Mammary epithelial cell (primary cell): ENCODE measurements at regions of chr16 and their contacts with region 1.

Region 1: GRCh38 chr16:67480833-67481560 is at the start of gene ATP6V0D1:
- DNase-seq: peak; percentile 97
- H3K4me3 ChIP-seq: peak within 1 kb of the TSS; percentile 81 to 97 (median 95)
- H3K27ac ChIP-seq: peak within 1 kb of the TSS; percentile 93
- H3K4me1 ChIP-seq: peaks cover 18% of the 10 kb centered on the region
- H3K27me3 ChIP-seq: no peaks in the 10 kb centered on the region
- CTCF ChIP-seq: peak; percentile 69 to 89
- total RNA-seq, gene ATP6V0D1: 93.3 to 124 TPM

Region 2: DNA sequence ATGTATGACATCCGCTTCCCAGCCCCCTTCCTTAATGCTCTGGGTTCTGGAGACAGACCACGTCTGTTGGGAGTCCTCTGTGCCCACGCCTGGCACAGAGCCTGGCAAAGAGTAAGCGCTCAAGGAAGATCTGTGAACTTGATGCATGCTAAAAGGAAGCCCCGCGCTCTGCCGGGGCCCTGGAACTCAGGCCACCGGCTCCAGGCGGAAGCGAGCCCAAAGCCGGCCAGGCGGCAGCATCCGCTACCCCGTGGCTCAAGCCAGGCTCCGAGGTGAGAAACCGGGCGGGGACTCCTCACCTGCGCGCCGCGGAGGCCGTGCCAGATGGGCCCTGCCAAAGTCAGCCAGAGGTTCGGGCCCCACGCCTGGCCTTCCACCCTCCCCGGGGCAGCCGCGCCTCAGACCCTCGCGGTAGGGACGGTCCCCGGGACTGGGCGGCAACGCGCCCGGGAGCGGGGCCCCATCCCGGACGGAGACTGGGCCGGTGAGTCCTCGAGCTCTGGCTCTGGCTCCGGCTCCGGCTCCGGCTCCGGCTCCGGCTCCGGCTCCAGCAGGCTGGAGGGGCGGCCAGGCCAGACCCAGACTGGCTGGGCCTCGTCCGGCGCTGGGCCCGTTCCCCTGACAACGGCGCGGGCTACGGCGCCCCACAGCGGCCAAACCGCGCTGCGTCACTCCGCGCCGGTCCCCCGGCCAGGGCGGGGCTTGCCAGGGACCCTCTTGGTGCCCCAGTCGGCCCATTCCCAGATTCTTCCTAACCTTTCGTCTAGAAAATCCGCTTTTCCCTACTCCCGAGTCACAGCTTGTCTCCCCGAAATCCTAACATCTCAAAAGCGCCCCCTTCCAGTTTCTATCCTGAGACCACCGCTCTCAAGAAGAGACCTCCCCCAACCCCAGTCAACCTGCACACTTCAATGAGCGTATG is 64.9 kb before region 1 on chr16 and contains the start of gene ZDHHC1:
- CTCF ChIA-PET with region 1: no interaction called
- dilution Hi-C with region 1: loop called (anchors 5 kb)
- in situ Hi-C with region 1: no loop called
- intact Hi-C with region 1: no loop called
- DNase-seq: peak; percentile 53
- H3K4me3 ChIP-seq: peak within 1 kb of the TSS; percentile 54 to 74 (median 62)
- H3K27ac ChIP-seq: peak within 1 kb of the TSS; percentile 59
- H3K4me1 ChIP-seq: peaks cover 7% of the 10 kb centered on the region
- H3K27me3 ChIP-seq: no peaks in the 10 kb centered on the region
- CTCF ChIP-seq: peak; percentile 47 to 66
- total RNA-seq, gene ZDHHC1: 5.3 to 6.3 TPM

Region 3: GRCh38 chr16:67441271-67441753 is 39.7 kb before region 1 on chr16:
- CTCF ChIA-PET with region 1: no interaction called
- dilution Hi-C with region 1: no loop called
- in situ Hi-C with region 1: no loop called
- intact Hi-C with region 1: no loop called
- DNase-seq: no peak
- H3K4me3 ChIP-seq: no peak overlapping the region
- H3K27ac ChIP-seq: no peak overlapping the region
- H3K4me1 ChIP-seq: no peaks in the 10 kb centered on the region
- H3K27me3 ChIP-seq: no peaks in the 10 kb centered on the region
- CTCF ChIP-seq: no peak

Region 4: GRCh38 chr16:67514382-67514828 is 33.4 kb after region 1 on chr16:
- CTCF ChIA-PET with region 1: interaction called, 5 read pairs
- dilution Hi-C with region 1: no loop called
- in situ Hi-C with region 1: no loop called
- intact Hi-C with region 1: loop called (anchors 1 kb)
- DNase-seq: peak; percentile 75
- H3K4me3 ChIP-seq: no peak overlapping the region
- H3K27ac ChIP-seq: no peak overlapping the region
- H3K4me1 ChIP-seq: peaks cover 8% of the 10 kb centered on the region
- H3K27me3 ChIP-seq: no peaks in the 10 kb centered on the region
- CTCF ChIP-seq: peak; percentile 52 to 67

Region 5: GRCh38 chr16:67537270-67537635 is 56.3 kb after region 1 on chr16:
- CTCF ChIA-PET with region 1: no interaction called
- dilution Hi-C with region 1: no loop called
- in situ Hi-C with region 1: no loop called
- intact Hi-C with region 1: no loop called
- DNase-seq: no peak
- H3K4me3 ChIP-seq: peak overlapping the region; percentile 35 to 48 (median 35)
- H3K27ac ChIP-seq: no peak overlapping the region
- H3K4me1 ChIP-seq: peaks cover 21% of the 10 kb centered on the region
- H3K27me3 ChIP-seq: no peaks in the 10 kb centered on the region
- CTCF ChIP-seq: no peak

Region 6: GRCh38 chr16:67555795-67556212 is 74.8 kb after region 1 on chr16:
- CTCF ChIA-PET with region 1: no interaction called
- dilution Hi-C with region 1: loop called (anchors 5 kb)
- in situ Hi-C with region 1: no loop called
- intact Hi-C with region 1: no loop called
- DNase-seq: peak; percentile 85
- H3K4me3 ChIP-seq: no peak overlapping the region
- H3K27ac ChIP-seq: peak overlapping the region; percentile 58
- H3K4me1 ChIP-seq: peaks cover 22% of the 10 kb centered on the region
- H3K27me3 ChIP-seq: no peaks in the 10 kb centered on the region
- CTCF ChIP-seq: no peak

Region 7: DNA sequence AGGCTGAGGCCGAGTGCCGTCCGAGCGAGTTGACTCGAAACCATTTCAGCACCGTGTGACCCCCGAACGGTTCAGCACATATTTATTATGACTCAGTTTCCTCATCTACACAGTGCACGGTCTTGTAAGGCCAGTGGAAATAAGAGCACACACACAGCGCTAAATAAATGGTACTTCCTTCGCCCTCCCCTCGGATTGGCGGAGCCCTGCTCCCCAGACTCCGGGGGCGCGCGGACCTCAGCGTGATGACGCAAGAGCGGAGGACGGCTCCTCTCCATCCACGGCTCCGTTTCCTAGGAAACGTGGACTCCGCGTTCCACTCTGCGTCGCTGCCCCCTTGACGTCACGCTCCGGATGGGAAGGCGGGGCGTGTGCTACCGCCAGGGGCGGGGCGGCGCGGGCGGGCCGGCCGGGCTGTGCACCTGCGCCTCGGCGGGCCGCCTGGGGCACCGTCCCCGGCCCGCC is 179.6 kb after region 1 on chr16 and contains the start of gene PARD6A:
- CTCF ChIA-PET with region 1: no interaction called
- dilution Hi-C with region 1: loop called (anchors 5 kb)
- in situ Hi-C with region 1: no loop called
- intact Hi-C with region 1: loop called (anchors 5 kb)
- DNase-seq: peak; percentile 88
- H3K4me3 ChIP-seq: peak within 1 kb of the TSS; percentile 81 to 91 (median 82)
- H3K27ac ChIP-seq: peak within 1 kb of the TSS; percentile 84
- H3K4me1 ChIP-seq: peaks cover 18% of the 10 kb centered on the region
- H3K27me3 ChIP-seq: no peaks in the 10 kb centered on the region
- CTCF ChIP-seq: no peak
- total RNA-seq, gene PARD6A: 0.40 to 0.67 TPM

Region 8: DNA sequence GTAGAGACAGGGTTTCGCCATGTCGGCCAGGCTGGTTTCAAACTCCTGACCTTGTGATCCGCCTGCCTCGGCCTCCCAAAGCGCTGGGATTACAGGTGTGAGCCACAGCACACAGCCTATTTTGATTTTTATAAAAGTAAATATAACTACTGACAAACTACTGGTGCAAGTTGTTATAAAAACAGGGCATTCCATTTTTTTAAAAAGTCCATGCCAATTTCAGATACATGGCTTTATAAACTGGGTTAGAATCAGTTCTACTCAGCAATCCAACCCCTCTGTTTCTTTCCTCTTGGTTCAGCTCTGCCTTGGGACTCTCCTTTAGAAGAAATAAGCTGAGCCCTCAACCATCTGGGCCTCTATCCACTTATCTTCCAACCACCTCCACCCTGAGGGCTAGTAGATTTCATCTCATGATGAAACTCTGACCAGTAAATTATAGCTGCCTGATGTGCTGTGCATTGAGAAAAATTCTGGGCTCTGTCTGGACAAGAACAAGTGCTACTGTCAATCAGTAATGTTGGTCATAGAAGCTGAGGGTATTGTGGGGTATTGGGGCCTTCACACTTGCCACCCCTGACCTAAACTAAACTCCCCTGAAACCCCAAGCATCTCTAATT is 315.2 kb after region 1 on chr16:
- CTCF ChIA-PET with region 1: no interaction called
- dilution Hi-C with region 1: loop called (anchors 10 kb)
- in situ Hi-C with region 1: no loop called
- intact Hi-C with region 1: no loop called
- DNase-seq: peak; percentile 11
- H3K4me3 ChIP-seq: no peak overlapping the region
- H3K27ac ChIP-seq: no peak overlapping the region
- H3K4me1 ChIP-seq: no peaks in the 10 kb centered on the region
- H3K27me3 ChIP-seq: no peaks in the 10 kb centered on the region
- CTCF ChIP-seq: no peak

Region 9: DNA sequence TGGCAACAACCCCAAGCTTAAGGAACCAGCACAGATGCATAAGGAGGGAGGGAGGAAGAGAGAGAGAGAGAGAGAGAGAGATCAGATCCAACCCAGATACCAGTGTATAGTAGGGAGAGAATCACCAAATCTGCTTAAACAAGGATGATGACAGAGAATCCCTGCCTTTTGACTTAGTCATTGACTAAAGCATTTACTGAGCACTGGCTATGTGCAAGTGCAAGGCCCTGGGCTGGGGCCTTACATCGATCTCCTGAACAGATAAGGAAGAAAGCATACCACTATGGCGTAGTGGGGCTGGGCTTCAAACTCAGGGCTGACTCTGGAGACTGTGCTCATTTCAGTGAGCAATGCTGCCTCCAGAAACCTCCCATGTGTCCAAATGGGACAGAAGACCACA is 341.5 kb after region 1 on chr16:
- CTCF ChIA-PET with region 1: no interaction called
- dilution Hi-C with region 1: loop called (anchors 5 kb)
- in situ Hi-C with region 1: no loop called
- intact Hi-C with region 1: no loop called
- DNase-seq: no peak
- H3K4me3 ChIP-seq: no peak overlapping the region
- H3K27ac ChIP-seq: no peak overlapping the region
- H3K4me1 ChIP-seq: no peaks in the 10 kb centered on the region
- H3K27me3 ChIP-seq: no peaks in the 10 kb centered on the region
- CTCF ChIP-seq: no peak

Region 10: GRCh38 chr16:67865316-67865715 is 384.3 kb after region 1 on chr16:
- CTCF ChIA-PET with region 1: no interaction called
- dilution Hi-C with region 1: no loop called
- in situ Hi-C with region 1: no loop called
- intact Hi-C with region 1: no loop called
- DNase-seq: peak; percentile 34
- H3K4me3 ChIP-seq: no peak overlapping the region
- H3K27ac ChIP-seq: no peak overlapping the region
- H3K4me1 ChIP-seq: peaks cover 22% of the 10 kb centered on the region
- H3K27me3 ChIP-seq: no peaks in the 10 kb centered on the region
- CTCF ChIP-seq: peak; percentile 34 to 65

Region 11: DNA sequence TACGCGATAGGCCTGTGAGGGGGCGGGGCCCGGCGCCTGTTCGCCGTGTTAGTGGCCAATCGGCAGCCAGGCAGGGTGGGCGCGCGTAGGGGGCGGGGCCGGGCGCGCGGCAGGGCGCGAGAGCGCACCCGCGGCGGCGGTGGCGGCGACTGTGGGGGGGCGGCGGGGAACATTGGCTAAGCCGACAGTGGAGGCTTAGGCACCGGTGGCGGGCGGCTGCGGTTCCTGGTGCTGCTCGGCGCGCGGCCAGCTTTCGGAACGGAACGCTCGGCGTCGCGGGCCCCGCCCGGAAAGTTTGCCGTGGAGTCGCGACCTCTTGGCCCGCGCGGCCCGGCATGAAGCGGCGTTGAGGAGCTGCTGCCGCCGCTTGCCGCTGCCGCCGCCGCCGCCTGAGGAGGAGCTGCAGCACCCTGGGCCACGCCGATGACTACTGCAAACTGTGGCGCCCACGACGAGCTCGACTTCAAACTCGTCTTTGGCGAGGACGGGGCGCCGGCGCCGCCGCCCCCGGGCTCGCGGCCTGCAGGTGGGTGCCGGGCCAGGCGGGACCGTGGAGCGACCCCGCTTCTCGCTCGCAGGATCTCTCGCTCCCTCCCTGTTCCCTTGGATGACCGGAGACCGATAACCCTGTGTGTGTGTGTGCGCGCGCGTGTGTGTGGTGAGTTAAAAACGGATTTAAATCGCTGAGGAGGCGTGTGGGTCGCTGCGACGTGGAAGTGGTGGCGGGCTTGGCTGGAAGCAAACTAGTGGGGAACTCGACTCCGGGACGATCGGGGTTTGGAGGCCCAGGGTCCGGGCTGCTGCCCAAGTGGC is 604.5 kb after region 1 on chr16 and contains the start of gene NFATC3:
- CTCF ChIA-PET with region 1: no interaction called
- dilution Hi-C with region 1: no loop called
- in situ Hi-C with region 1: no loop called
- intact Hi-C with region 1: no loop called
- DNase-seq: peak; percentile 93
- H3K4me3 ChIP-seq: peak within 1 kb of the TSS; percentile 73 to 84 (median 83)
- H3K27ac ChIP-seq: peak within 1 kb of the TSS; percentile 52
- H3K4me1 ChIP-seq: peaks cover 29% of the 10 kb centered on the region
- H3K27me3 ChIP-seq: no peaks in the 10 kb centered on the region
- CTCF ChIP-seq: no peak
- total RNA-seq, gene NFATC3: 19.2 to 27.3 TPM